ENCODE measurements at regions of chr7 and their contacts with region 1.

Region 1: DNA sequence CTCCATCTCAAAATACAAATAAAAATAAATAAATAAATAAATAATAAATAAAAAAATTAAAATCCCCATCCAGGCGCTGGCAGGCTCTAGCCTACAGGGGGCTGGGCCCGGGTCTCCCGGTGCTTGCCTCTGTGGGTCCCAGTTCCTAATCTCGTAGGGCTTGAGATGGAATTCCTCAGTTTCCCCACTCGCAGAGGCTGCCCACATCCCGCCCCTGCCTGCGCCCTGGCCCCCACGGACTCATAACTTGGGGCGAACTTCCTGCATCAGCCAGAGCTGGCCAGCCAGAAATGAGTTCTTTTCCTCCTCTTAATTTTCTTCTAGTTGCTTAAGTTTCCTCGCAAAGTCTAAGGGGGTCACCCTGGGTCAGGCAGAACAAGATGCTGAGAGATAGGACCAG is 22.0 kb upstream of the SRRM3 start:
- DNase-seq: no peak
- ATAC-seq: no peak
- H3K4me3 ChIP-seq: no peak overlapping the region
- H3K27ac ChIP-seq: no peak overlapping the region
- H3K4me1 ChIP-seq: no peaks in the 10 kb centered on the region
- H3K27me3 ChIP-seq: no peaks in the 10 kb centered on the region
- CTCF ChIP-seq: no peak
- POLR2A ChIP-seq: no peak

Region 2: GRCh38 chr7:76262683-76263402 is 83.2 kb after region 1 on chr7:
- in situ Hi-C with region 1: no loop called
- intact Hi-C with region 1: loop called (anchors 5 kb)
- DNase-seq: peak in 1 of 2 donors; percentile 24
- ATAC-seq: peak in 1 of 2 donors; percentile 68
- H3K4me3 ChIP-seq: no peak overlapping the region
- H3K27ac ChIP-seq: no peak overlapping the region
- H3K4me1 ChIP-seq: peaks cover 0 to 5% of the 10 kb centered on the region in 2 donors
- H3K27me3 ChIP-seq: peaks cover 28 to 48% (median 38%) of the 10 kb centered on the region in 3 donors
- CTCF ChIP-seq: peak; percentile 33 to 56 (median 45)
- POLR2A ChIP-seq: no peak

Region 3: DNA sequence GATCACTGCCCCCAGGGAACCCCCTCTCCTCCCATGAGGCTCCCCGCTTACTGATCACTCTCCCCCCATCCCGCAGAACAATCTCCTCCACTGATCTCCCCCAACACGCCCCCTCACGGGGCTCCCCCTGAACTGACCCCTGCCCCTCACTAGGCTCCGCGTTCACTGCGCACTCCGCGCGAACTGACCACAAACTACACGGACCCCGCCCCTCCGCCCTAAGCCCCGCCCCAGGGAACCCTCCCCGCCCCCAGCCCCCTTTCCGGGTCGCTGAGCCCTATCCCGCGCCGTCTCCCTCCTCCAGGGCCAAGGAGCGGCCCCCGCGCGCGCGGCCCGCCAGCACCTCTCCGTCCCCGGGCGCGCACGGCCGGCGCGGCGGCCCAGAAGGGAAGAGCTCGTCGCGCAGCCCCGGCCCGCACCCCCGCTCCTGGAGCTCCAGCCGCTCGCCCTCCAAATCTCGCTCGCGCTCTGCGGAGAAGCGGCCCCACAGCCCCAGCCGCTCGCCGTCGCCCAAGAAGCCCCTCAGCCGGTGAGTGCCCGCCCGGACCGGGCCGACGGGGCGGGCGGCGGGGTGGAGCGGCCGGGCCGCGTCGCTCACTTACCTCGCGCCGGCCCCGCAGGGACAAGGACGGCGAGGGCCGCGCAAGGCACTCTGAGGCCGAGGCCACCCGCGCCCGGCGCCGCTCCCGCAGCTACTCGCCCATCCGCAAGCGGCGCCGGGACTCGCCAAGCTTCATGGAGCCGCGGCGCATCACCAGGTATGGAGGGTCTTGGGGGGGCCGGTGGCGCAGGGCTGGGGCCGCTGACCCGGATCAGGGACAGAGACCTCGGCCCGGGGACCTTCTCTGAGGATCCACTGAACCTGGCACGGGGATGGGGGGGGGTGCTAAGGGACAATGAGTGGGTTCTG is 102.9 kb after region 1 on chr7:
- in situ Hi-C with region 1: loop called in 3 of 4 experiments (anchors 10 kb)
- intact Hi-C with region 1: no loop called
- DNase-seq: no peak
- ATAC-seq: peak in 1 of 2 donors; percentile 19
- H3K4me3 ChIP-seq: peak overlapping the region; percentile 36 to 55 (median 48)
- H3K27ac ChIP-seq: no peak overlapping the region
- H3K4me1 ChIP-seq: peaks cover 4 to 5% of the 10 kb centered on the region in 2 donors
- H3K27me3 ChIP-seq: peaks cover 21 to 30% (median 22%) of the 10 kb centered on the region in 3 donors
- CTCF ChIP-seq: no peak
- POLR2A ChIP-seq: peak in 1 of 2 donors; percentile 16

Region 4: DNA sequence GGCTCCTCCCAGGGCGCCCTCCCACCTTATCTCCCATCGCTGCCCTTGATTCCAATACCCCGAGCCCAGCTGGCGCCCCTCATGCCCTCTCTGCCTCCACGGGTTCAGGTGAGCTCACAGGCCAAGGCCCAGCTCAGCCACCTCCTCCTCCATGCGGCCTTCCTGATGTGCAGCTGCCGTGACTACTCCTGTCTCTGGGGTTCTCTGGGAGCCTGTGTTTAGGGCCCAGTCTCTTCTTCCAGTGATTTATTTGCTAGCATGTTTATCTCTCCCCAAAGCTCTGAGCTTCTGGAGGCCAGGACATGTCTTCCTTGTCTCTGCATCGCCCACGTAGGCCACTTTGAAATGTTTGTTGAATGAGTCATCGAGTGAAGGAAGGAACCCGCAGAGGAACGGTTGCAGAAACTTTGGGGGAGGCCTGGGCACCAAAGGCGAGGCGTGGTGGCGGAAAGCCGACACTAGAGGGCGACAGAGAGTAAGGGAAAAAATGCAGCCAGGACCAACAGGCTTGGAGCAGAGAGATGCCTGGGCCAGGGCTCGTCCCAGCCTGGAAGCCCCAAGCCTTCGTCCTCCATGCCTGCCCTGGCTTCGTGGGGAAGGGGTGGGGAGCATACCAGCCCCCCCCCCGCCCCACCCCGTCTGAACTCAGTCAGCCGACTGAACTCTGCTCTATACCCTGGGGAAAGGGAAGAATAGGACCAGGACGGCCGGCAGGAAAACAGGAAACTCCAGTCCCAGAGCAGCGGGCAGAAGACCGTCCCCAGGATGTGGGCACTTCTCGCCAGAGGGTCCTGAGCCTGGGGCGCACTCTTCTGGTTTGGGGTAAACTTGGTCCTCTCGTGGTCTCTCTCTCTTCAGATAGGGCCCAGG is 111.9 kb after region 1 on chr7:
- in situ Hi-C with region 1: loop called in 2 of 4 experiments (anchors 10 kb)
- intact Hi-C with region 1: loop called (anchors 1 kb)
- DNase-seq: peak; percentile 82 to 91
- ATAC-seq: peak; percentile 49 to 53
- H3K4me3 ChIP-seq: peak overlapping the region; percentile 33 to 49 (median 39)
- H3K27ac ChIP-seq: peak overlapping the region; percentile 99 to 100 (median 100)
- H3K4me1 ChIP-seq: peaks cover 40 to 45% of the 10 kb centered on the region in 2 donors
- H3K27me3 ChIP-seq: no peaks in the 10 kb centered on the region
- CTCF ChIP-seq: peak; percentile 95 to 99 (median 98)
- POLR2A ChIP-seq: peak; percentile 26 to 48

Region 5: DNA sequence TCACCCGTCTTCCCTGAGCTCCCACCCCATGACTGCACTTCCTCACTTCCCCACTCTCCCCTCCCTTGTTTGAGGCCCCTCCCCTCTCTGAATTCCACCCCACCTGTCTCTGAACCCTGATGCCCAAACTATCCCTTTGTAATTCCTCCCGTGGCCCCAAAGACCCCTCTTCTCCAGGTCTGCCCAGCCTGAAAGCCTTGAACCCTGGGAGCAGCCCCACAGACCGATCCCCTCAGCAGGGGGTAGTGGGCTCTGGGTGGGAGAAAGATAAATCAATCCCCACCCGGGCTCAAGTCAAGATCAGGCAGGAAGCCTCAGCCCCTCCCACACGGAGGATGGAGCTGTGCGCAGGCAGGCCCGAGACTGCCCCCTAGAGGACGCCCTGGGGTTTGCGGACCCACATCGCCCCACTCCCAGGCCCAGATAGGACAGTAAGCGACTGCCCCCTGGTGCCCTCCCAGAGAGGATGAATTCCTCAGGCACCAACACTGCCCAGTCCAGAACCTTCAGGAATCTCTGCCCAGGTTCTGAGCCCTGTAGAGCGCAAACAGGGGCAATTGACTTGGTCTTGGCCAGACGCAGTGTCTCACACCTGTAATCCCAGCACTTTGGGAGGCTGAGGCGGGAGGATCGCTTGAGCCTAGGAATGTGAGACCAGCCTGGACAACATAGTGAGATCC is 134.5 kb after region 1 on chr7:
- in situ Hi-C with region 1: loop called (anchors 5 to 10 kb)
- intact Hi-C with region 1: no loop called
- DNase-seq: peak; percentile 94 to 95
- ATAC-seq: peak; percentile 62 to 64
- H3K4me3 ChIP-seq: no peak overlapping the region
- H3K27ac ChIP-seq: peak overlapping the region; percentile 70 to 85 (median 82)
- H3K4me1 ChIP-seq: peaks cover 29 to 33% of the 10 kb centered on the region in 2 donors
- H3K27me3 ChIP-seq: no peaks in the 10 kb centered on the region
- CTCF ChIP-seq: peak; percentile 100
- POLR2A ChIP-seq: no peak

Region 6: GRCh38 chr7:76359111-76359978 is 179.7 kb after region 1 on chr7:
- in situ Hi-C with region 1: no loop called
- intact Hi-C with region 1: loop called (anchors 5 kb)
- DNase-seq: peak; percentile 98 to 99
- ATAC-seq: peak; percentile 91 to 93
- H3K4me3 ChIP-seq: peak overlapping the region; percentile 81 to 97 (median 90)
- H3K27ac ChIP-seq: peak overlapping the region; percentile 96 to 100 (median 98)
- H3K4me1 ChIP-seq: peaks cover 41 to 43% of the 10 kb centered on the region in 2 donors
- H3K27me3 ChIP-seq: no peaks in the 10 kb centered on the region
- CTCF ChIP-seq: peak; percentile 69 to 91 (median 83)
- POLR2A ChIP-seq: no peak